WTC11 (cell line): ENCODE measurements at regions of chr10 and their contacts with region 1.

Region 1: GRCh38 chr10:109852475-109853037 is 70.8 kb downstream of the XPNPEP1 start:
- DNase-seq: peak; percentile 86
- ATAC-seq: peak; percentile 95
- H3K4me3 Mint-ChIP-seq: no peak overlapping the region
- H3K27ac Mint-ChIP-seq: no peak overlapping the region
- H3K4me1 Mint-ChIP-seq: 0 out of 2 replicates have a peak, but pooled peaks cover 3% of the 10 kb centered on the region
- H3K27me3 Mint-ChIP-seq: peaks cover 4% of the 10 kb centered on the region
- CTCF ChIP-seq: peak; percentile 64

Region 2: GRCh38 chr10:109838592-109839244 is 13.8 kb before region 1 on chr10:
- CTCF ChIA-PET with region 1: interaction called, 10 read pairs
- POLR2A ChIA-PET with region 1: no interaction called
- DNase-seq: peak; percentile 19
- ATAC-seq: peak; percentile 64
- H3K4me3 Mint-ChIP-seq: no peak overlapping the region
- H3K27ac Mint-ChIP-seq: no peak overlapping the region
- H3K4me1 Mint-ChIP-seq: 0 out of 2 replicates have a peak, but pooled peaks cover 3% of the 10 kb centered on the region
- H3K27me3 Mint-ChIP-seq: no peaks in the 10 kb centered on the region
- CTCF ChIP-seq: no peak